Activated T-helper 2 cell treated with anti-CD3 and anti-CD28 coated beads, Interferon-gamma antibody, Interleukin-2, Interleukin-4, amounts not matched to agents 10 μg/mL and 5 μg/mL and 100 μg/mL, durations not matched to agents 14 hours and 24 hours and 36 hours (primary cell): ENCODE measurements at regions of chr6 and their contacts with region 1.

Region 1: GRCh38 chr6:137707590-137708360 is 159.3 kb upstream of the TNFAIP3 start:
- DNase-seq: peak; percentile 87
- H3K4me3 Mint-ChIP-seq: peak overlapping the region; percentile 49
- H3K27ac Mint-ChIP-seq: peak overlapping the region; percentile 86
- H3K4me1 Mint-ChIP-seq: peaks cover 78% of the 10 kb centered on the region
- H3K27me3 Mint-ChIP-seq: no peaks in the 10 kb centered on the region

Region 2: GRCh38 chr6:137493218-137494038 is 214.3 kb before region 1 on chr6:
- intact Hi-C with region 1: no loop called
- DNase-seq: no peak
- H3K4me3 Mint-ChIP-seq: peak overlapping the region; percentile 30
- H3K27ac Mint-ChIP-seq: no peak overlapping the region
- H3K4me1 Mint-ChIP-seq: peaks cover 45% of the 10 kb centered on the region
- H3K27me3 Mint-ChIP-seq: peaks cover 93% of the 10 kb centered on the region

Region 3: DNA sequence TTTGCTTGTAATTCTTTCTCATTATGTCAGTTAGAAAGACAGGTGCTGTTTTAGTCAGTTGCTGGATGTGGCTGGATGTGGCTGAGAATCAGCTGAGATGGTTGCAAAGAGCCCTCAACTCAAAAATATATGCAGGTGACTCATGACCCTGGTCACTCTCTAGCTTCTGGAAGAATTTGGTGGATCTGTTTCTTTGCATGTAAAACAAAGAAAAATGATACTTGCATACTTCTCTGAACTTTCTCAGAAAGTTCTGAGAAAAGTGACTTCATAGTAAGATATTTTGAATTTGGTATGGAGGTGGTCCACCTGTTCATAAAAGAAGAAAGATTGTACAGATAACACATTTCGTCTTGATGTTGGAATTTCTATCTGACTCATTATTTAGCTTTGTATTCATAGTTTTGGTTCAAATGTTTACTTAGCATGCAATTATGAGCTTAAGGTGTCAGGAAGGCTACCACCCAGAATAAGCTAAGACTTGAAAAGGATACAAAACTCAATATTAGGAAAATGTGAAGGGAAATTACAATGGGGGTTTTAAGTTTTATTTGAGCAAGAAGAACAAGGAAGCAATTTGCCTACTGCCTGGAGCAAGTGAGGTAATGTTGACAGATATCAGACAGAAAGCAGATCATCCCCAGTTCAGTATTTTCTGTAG is 50.3 kb before region 1 on chr6:
- intact Hi-C with region 1: loop called (anchors 2 kb)
- DNase-seq: peak; percentile 34
- H3K4me3 Mint-ChIP-seq: no peak overlapping the region
- H3K27ac Mint-ChIP-seq: peak overlapping the region; percentile 65
- H3K4me1 Mint-ChIP-seq: peaks cover 32% of the 10 kb centered on the region
- H3K27me3 Mint-ChIP-seq: no peaks in the 10 kb centered on the region

Region 4: DNA sequence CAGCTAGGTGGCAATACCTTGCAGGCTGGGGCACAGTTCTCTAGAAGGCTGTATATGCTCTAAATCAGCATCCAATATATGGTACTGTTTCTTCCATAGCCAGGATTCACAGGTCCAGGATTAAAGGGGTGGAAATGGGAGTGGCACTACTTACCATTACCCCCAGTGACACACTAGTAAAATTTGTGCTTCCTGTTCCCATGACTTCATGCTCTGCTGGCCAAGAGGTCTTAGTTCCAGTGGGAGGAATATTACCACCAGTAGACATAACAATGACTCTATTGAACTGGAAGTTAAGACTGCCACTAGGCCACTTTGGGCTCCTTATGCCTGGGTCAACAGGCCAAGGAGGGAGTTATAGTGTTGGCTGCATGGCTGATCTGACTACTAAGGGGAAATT is 15.0 kb before region 1 on chr6:
- intact Hi-C with region 1: no loop called
- DNase-seq: no peak
- H3K4me3 Mint-ChIP-seq: no peak overlapping the region
- H3K27ac Mint-ChIP-seq: no peak overlapping the region
- H3K4me1 Mint-ChIP-seq: peaks cover 22% of the 10 kb centered on the region
- H3K27me3 Mint-ChIP-seq: no peaks in the 10 kb centered on the region

Region 5: DNA sequence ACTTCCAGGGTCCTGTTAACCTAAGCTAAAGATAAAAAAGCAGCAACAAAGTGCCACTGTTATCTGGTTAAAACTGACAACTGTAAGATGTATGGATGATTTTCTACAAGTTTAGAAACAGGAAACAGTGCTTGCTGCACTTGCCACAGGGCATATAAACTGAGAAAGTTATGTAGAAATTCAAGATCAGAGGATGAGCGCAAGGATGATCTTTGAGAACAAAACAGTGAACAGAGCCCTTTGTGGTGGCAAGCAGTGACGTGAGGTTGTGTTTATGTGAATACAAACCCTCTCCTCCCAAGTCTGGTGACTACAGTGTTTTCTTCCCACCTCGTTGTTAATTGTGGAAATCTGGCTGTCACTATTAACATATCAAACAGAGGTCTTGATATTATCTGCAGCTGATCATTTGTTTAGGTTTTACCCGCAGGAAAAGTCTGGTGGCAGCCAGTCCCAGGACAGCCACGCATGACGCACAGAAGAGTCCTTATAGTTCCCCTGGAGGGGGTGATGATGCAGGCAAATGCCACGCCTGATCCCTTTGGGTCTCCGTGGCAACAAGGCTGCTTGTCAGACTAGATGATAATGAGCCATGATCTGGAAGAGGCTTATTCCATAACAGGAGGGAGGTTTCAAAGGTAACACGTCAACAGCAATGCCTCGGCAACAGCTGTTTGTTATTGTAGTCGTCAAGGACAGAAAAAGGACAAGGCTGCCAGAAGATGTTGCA is 116.2 kb after region 1 on chr6:
- intact Hi-C with region 1: loop called (anchors 1 kb)
- DNase-seq: peak; percentile 70
- H3K4me3 Mint-ChIP-seq: peak overlapping the region; percentile 81
- H3K27ac Mint-ChIP-seq: peak overlapping the region; percentile 96
- H3K4me1 Mint-ChIP-seq: peaks cover 80% of the 10 kb centered on the region
- H3K27me3 Mint-ChIP-seq: no peaks in the 10 kb centered on the region

Region 6: DNA sequence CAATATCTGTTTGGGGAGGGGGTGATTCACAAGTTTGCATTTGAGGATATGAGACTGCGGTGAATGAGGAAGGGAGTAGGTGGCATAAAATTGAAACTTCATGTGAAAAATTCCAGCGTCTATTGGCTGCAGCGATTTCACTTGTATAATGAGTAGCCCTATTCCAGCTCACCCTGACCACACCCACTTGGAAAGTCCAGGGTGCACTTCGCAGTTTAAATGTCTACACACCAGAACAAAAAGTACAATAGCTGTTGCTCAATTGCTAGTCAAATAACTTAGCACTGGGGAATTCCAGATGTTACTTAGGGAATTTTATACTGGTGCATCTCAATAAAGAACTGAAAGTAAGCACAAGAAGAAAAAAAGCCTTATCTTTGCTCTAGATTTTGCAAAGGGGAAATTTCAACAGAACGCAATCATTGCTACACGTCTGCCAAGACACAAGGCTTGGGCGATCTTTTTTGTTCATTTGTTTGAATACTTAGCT is 165.5 kb after region 1 on chr6:
- intact Hi-C with region 1: loop called (anchors 1 kb)
- DNase-seq: peak; percentile 44
- H3K4me3 Mint-ChIP-seq: peak overlapping the region; percentile 96
- H3K27ac Mint-ChIP-seq: peak overlapping the region; percentile 96
- H3K4me1 Mint-ChIP-seq: peaks cover 52% of the 10 kb centered on the region
- H3K27me3 Mint-ChIP-seq: no peaks in the 10 kb centered on the region

Region 7: DNA sequence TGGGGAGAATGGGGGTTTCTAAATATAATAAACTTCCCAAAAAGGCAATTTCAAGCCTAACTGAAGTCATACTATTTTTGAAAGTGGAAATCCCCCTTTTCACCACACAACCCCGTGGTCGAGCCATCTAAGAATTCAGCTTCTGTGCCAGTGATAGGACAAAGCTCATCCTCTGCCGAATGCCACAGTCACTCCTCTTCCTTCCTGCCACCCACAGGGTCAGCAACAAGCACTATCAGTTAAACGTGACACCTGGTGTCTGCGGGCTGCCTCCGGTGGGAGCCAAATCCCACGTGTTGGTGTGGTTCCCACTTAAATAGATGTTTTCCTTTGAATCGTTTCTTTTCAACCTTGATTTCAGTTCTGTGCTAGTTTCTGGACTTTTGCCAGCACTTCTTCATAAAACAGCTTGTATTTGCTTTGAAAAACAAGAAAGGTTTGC is 220.0 kb after region 1 on chr6:
- intact Hi-C with region 1: loop called (anchors 5 kb)
- DNase-seq: peak; percentile 74
- H3K4me3 Mint-ChIP-seq: peak overlapping the region; percentile 59
- H3K27ac Mint-ChIP-seq: peak overlapping the region; percentile 97
- H3K4me1 Mint-ChIP-seq: peaks cover 70% of the 10 kb centered on the region
- H3K27me3 Mint-ChIP-seq: no peaks in the 10 kb centered on the region

Region 8: DNA sequence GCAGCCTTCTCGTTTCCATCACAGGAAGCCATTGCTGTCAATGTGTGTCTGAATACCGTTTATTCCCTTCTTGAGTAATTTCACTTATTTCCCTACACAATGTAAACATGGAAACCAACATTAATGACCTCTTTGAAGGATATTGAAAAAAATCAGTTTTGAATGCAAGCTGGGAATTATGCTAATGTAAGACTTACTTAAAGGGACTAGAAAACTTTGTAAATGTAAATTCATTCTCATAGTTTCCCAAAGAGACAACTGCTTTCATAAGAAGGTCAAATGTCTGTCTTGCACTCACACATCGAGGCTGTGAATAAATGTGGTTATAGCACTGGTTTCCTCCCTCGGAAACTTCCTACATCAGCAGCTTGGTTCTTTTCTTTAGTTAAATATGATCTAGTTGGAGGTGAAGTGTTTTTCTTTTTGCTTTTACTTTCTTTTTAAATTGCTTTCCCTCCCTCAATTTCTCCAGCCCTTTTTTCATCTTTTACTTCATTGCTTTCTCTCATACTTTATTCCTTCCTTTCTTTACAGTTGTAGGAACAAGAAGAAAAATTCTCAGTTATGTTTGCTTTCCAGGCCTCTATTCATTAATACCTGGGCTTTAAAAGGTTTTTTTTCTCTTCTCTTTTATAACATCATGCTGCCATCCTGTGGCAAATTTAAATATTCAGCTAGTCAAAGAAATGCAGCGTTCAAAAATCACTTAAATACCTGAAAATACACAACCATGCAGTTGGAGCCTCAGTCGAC is 267.6 kb after region 1 on chr6:
- intact Hi-C with region 1: loop called (anchors 1 kb)
- DNase-seq: peak; percentile 26
- H3K4me3 Mint-ChIP-seq: peak overlapping the region; percentile 72
- H3K27ac Mint-ChIP-seq: peak overlapping the region; percentile 93
- H3K4me1 Mint-ChIP-seq: peaks cover 57% of the 10 kb centered on the region
- H3K27me3 Mint-ChIP-seq: no peaks in the 10 kb centered on the region

Region 9: DNA sequence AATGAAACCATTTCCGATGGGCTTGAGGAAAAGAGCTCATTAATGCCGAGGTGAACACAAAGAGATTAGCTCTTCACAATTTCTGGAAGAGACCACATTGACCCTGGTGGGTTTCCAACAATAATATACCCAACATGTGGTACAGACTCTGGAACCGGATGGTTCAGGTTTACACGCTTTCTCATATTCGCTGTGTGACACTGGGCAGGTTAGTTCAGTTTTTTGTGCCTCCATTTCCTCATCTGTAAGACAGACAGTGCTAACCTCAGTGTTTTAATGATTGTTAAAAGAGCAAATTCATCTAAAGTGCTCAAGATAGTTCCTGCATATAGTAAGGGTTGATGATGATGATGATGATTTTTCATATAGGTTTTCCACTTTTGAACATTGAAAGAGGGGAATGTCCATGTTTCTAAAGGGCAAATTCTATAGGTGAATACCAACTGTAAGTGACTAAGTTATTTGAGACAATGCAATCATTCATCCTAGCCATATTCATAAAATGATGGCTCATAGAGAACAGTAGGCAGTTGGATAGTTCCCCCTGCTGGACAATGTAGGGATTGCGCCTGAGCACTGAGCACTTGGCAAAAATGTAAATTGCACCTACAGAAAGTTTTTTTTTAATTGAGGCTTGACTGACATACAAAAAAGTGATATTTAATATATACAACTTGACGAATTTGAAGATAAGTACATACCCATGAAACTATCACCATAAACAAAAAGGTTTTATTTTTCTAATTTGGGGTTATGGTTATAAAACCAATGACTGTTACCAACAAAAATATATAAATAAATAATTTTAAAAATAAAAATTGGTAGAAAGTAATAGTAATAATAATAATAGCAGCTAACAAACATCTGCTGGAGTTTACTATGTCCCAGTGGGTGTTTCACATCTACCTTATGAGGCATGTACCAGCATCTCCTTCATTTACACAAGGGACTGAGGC is 401.5 kb after region 1 on chr6:
- intact Hi-C with region 1: loop called (anchors 1 kb)
- DNase-seq: peak; percentile 65
- H3K4me3 Mint-ChIP-seq: peak overlapping the region; percentile 11
- H3K27ac Mint-ChIP-seq: no peak overlapping the region
- H3K4me1 Mint-ChIP-seq: peaks cover 26% of the 10 kb centered on the region
- H3K27me3 Mint-ChIP-seq: peaks cover 36% of the 10 kb centered on the region